ENCODE measurements at regions of chr11 and their contacts with region 1.

Region 1: DNA sequence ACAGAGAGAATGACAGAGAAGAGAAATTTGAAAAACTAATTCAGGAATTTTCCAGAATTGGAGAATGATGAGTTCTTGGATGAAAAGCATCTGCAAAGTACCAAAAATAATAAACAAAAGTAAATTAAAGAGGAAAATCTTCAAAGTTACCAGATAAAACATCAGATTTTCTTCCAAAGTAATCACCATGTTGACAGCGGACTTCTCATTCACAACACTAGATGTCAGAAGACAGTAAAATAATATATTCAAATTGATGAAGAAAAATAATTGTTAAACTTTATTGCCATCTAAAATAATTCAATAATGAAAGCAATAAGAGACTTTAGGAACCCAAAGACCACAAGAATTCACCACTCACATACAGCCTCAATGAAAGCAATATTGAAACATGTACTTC is 355.2 kb downstream of the DYNC2H1 start:
- DNase-seq: no peak
- ATAC-seq: no peak
- H3K4me3 ChIP-seq: no peak overlapping the region
- H3K27ac ChIP-seq: no peak overlapping the region
- H3K4me1 ChIP-seq: no peaks in the 10 kb centered on the region
- H3K27me3 ChIP-seq: no peaks in the 10 kb centered on the region

Region 2: GRCh38 chr11:103183981-103184611 is 280.3 kb before region 1 on chr11:
- intact Hi-C with region 1: no loop called
- DNase-seq: no peak
- ATAC-seq: no peak
- H3K4me3 ChIP-seq: no peak overlapping the region
- H3K27ac ChIP-seq: no peak overlapping the region
- H3K4me1 ChIP-seq: no peaks in the 10 kb centered on the region
- H3K27me3 ChIP-seq: no peaks in the 10 kb centered on the region

Region 3: DNA sequence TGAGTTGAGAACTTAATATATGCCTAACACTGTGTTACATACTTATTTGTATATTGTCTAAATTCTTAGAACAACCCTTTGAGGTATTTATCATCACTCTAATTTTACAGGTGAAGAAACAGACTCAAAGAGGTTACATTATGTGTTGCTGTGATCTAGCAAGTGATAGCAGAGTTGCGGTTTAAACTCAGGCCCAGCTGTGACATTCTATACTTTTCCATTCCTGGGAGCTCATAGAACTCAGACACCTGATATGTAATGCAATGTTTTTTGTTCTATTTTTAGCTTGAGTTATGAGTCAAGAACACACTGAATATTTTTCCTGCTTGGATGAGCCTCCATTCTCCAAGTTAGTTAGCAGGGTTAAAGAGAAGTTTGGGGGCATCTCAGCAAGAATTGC is 122.3 kb after region 1 on chr11:
- intact Hi-C with region 1: loop called in 1 of 4 experiments (anchors 10 kb)
- DNase-seq: no peak
- ATAC-seq: no peak
- H3K4me3 ChIP-seq: no peak overlapping the region
- H3K27ac ChIP-seq: no peak overlapping the region
- H3K4me1 ChIP-seq: no peaks in the 10 kb centered on the region
- H3K27me3 ChIP-seq: no peaks in the 10 kb centered on the region

Region 4: GRCh38 chr11:103798026-103798425 is 333.6 kb after region 1 on chr11:
- intact Hi-C with region 1: no loop called
- DNase-seq: no peak
- ATAC-seq: peak in 1 of 2 donors; percentile 39
- H3K4me3 ChIP-seq: no peak overlapping the region
- H3K27ac ChIP-seq: no peak overlapping the region
- H3K4me1 ChIP-seq: peaks cover 7% of the 10 kb centered on the region
- H3K27me3 ChIP-seq: no peaks in the 10 kb centered on the region